Activated naive CD4-positive, alpha-beta T cell treated with anti-CD3 and anti-CD28 coated beads for 36 hours (primary cell): ENCODE measurements at regions of chr10 and their contacts with region 1.

Region 1: DNA sequence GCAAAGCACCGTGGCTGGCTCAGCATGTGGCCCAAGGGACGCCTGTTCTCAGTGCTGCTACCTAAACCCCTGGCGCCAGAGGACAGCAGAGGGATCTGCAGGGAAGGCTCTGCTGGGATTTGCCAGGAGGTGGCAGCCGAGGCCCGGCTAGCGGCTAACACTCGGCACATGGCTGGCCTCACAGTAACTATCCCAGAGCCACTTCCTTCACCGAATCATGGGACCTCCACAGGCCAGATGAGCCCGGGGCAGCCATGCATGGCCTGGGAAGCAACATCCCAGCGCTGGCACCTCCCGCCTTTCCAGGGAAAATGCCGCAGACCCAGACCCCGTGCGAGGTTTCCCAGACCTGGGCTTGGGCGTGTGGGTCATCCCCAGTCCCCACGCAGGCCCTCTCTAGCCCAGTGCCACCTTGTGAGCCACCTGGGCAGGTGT is 36.4 kb downstream of the DPYSL4 start:
- DNase-seq: peak; percentile 86
- H3K4me3 Mint-ChIP-seq: no peak overlapping the region
- H3K27ac Mint-ChIP-seq: no peak overlapping the region
- H3K4me1 Mint-ChIP-seq: no peaks in the 10 kb centered on the region
- H3K27me3 Mint-ChIP-seq: no peaks in the 10 kb centered on the region

Region 2: DNA sequence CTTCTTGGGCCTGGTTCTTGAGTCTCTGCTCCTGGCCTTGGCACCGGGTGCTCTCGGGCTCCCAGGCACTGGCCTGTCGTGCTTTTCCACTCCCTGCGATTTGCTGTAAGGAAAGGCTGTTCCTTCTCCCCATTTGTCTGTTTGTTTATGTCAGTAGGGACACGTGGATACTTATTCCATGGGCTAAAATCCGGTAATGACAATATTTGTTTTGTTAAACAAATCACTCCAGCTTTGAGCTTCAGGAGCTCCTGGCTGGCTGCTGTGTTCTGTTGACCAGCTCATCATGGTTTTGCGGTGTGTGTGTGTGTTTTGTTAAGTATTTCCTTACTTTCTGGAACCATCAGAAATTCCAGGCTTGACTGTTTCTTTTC is 174.9 kb before region 1 on chr10:
- CTCF ChIA-PET with region 1: no interaction called
- intact Hi-C with region 1: no loop called
- DNase-seq: no peak
- H3K4me3 Mint-ChIP-seq: no peak overlapping the region
- H3K27ac Mint-ChIP-seq: no peak overlapping the region
- H3K4me1 Mint-ChIP-seq: no peaks in the 10 kb centered on the region
- H3K27me3 Mint-ChIP-seq: peaks cover 26% of the 10 kb centered on the region

Region 3: GRCh38 chr10:132204781-132205473 is 18.2 kb before region 1 on chr10:
- CTCF ChIA-PET with region 1: no interaction called
- intact Hi-C with region 1: no loop called
- DNase-seq: no peak
- H3K4me3 Mint-ChIP-seq: no peak overlapping the region
- H3K27ac Mint-ChIP-seq: no peak overlapping the region
- H3K4me1 Mint-ChIP-seq: no peaks in the 10 kb centered on the region
- H3K27me3 Mint-ChIP-seq: no peaks in the 10 kb centered on the region

Region 4: GRCh38 chr10:132239126-132240031 is 16.2 kb after region 1 on chr10:
- CTCF ChIA-PET with region 1: no interaction called
- intact Hi-C with region 1: no loop called
- DNase-seq: no peak
- H3K4me3 Mint-ChIP-seq: no peak overlapping the region
- H3K27ac Mint-ChIP-seq: no peak overlapping the region
- H3K4me1 Mint-ChIP-seq: no peaks in the 10 kb centered on the region
- H3K27me3 Mint-ChIP-seq: no peaks in the 10 kb centered on the region

Region 5: GRCh38 chr10:132354356-132355094 is 131.4 kb after region 1 on chr10:
- CTCF ChIA-PET with region 1: interaction called, 10 read pairs
- intact Hi-C with region 1: loop called (anchors 1 kb)
- DNase-seq: no peak
- H3K4me3 Mint-ChIP-seq: no peak overlapping the region
- H3K27ac Mint-ChIP-seq: no peak overlapping the region
- H3K4me1 Mint-ChIP-seq: peaks cover 3% of the 10 kb centered on the region
- H3K27me3 Mint-ChIP-seq: no peaks in the 10 kb centered on the region

Region 6: GRCh38 chr10:132371641-132372081 is 148.5 kb after region 1 on chr10:
- CTCF ChIA-PET with region 1: no interaction called
- intact Hi-C with region 1: loop called (anchors 5 kb)
- DNase-seq: peak; percentile 42
- H3K4me3 Mint-ChIP-seq: no peak overlapping the region
- H3K27ac Mint-ChIP-seq: no peak overlapping the region
- H3K4me1 Mint-ChIP-seq: peaks cover 3% of the 10 kb centered on the region
- H3K27me3 Mint-ChIP-seq: no peaks in the 10 kb centered on the region

Region 7: DNA sequence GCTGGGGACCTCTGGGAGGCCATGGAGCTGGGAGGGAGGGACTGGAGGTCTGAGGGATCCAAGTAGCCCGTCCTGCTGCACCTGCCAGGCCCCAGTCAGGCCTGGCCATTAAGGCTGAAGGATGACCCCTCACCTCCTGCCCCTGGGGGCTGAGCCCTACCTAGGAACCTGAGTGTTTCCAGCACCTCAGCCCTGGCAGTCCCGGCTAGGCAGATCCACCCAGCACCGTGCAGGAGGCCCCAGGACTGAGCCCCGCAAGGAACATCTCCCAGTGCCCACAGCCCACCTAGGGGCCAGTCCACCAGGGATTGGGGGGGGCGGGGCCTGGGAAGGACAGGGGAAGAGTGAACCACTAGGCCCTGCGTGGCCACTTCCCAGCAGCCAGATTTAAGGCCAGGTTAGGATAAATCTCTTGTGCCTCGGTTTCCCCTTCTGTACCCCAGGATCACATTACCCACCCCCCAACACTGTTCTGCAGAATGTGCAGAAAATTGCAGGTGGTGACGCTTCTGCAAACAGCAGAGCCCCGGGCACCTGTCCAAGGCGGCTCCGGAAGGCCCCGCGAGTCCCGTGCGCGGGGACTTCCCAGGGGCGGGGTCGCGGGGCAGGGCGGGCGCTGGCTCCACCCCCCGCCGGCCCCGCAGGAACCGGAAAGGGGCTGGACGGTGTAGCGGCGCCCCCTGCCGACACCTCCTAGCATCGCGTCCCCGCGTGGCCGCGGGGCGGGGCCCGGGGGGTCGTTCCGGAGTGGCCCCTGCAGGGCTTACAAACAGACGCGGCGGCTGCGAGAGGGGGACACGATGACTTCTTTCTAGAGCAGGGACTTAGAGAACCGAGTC is 229.7 kb after region 1 on chr10:
- CTCF ChIA-PET with region 1: interaction called, 4 read pairs
- intact Hi-C with region 1: loop called (anchors 1 kb)
- DNase-seq: peak; percentile 90
- H3K4me3 Mint-ChIP-seq: peak overlapping the region; percentile 6
- H3K27ac Mint-ChIP-seq: peak overlapping the region; percentile 24
- H3K4me1 Mint-ChIP-seq: peaks cover 19% of the 10 kb centered on the region
- H3K27me3 Mint-ChIP-seq: no peaks in the 10 kb centered on the region

Region 8: DNA sequence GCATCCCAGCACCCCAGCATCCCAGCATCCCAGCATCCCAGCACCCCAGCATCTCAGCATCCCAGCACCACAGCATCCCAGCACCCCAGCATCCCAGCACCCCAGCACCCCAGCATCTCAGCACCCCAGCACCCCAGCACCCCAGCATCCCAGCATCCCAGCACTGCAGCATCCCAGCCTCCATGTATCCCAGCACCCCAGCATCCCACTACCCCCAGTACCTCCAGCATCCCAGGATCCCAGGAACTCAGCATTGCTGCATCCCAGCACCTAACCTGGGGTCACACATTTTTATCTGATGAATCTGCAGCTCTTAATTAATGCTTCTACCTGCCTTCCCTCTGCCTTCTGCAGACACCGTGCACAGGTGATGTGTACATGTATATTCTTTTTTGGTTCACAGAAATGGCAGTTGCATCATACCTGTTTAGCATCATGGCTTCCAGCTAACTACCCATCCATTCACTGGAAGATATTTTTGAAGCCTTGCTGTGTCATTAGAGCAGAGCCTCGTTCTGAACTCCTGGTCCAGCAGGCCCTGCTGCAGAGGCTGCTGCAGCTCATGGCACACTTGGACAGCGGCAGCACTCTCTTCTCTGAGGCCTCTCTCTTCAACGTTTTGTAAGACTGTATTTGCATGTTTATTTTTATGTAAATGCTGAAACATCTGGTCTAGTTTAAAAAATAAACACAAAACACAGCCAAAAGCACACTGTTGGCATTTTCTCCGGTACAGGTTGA is 723.8 kb after region 1 on chr10:
- CTCF ChIA-PET with region 1: no interaction called
- intact Hi-C with region 1: no loop called
- DNase-seq: no peak
- H3K4me3 Mint-ChIP-seq: no peak overlapping the region
- H3K27ac Mint-ChIP-seq: no peak overlapping the region
- H3K4me1 Mint-ChIP-seq: peaks cover 3% of the 10 kb centered on the region
- H3K27me3 Mint-ChIP-seq: peaks cover 37% of the 10 kb centered on the region